Right ventricle myocardium inferior (tissue), 1 donor: ENCODE measurements at regions of chr11 and their contacts with region 1.

Region 1: DNA sequence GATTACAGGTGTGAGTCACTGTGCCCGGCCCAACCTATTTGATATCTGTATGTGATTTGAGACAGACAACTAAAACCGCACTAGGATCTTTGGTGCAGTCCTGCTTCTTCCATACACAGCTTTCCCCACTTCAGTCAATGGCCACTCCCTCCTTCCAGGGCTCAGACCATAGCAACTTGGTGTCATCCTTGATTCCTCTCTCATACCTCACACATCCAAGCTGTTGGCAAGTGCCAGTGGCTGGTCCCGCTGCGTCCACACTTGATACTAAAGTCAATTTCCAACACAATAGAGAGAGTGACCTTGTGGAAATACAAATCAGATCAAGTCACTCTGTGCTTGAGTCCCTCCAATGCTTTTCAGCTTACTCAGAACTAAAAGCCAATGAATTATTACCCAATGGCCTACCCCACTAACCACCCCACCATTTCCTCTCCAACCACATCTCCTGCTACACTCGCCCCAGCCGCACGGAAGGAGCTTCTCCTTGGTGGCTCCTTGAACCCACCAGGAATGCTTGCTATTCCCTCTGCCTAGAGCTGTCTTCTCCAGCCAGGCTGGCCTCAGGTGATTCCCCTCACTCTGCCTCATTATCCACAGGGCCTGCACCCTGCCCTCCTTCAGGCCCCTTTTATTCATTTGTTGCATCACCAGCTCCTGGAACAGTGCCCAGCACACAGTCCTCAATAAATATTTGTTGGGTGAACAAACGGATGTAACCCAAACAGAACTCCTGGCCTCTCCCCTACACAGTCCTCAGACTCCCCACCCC is 12.9 kb downstream of the ABTB2 start:
- DNase-seq: no peak
- ATAC-seq: no peak

Region 2: GRCh38 chr11:33723238-33723887 is 621.6 kb before region 1 on chr11:
- intact Hi-C with region 1: no loop called
- DNase-seq: peak; percentile 57
- ATAC-seq: peak; percentile 63

Region 3: DNA sequence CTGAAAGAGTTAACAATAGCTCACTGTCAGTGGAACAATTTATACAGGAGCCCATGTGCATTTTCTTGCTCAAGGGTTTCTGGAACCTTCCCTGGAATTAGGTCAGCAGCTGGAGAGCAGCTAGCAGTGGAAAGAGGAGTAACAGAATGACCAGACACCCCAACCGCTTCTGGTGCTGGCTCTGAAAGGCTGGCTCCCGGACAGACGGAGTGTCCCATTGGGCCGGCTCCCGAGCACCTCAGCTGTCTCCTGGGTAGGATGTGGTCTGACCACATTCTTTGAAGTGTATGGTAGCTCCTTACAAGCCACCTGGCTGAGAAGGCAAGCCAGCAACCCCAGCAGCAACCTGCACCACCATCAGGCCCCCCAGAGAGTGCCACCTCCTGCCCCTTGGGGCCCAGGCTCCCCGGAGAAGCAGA is 31.8 kb before region 1 on chr11:
- intact Hi-C with region 1: loop called (anchors 5 kb)
- DNase-seq: no peak
- ATAC-seq: no peak

Region 4: DNA sequence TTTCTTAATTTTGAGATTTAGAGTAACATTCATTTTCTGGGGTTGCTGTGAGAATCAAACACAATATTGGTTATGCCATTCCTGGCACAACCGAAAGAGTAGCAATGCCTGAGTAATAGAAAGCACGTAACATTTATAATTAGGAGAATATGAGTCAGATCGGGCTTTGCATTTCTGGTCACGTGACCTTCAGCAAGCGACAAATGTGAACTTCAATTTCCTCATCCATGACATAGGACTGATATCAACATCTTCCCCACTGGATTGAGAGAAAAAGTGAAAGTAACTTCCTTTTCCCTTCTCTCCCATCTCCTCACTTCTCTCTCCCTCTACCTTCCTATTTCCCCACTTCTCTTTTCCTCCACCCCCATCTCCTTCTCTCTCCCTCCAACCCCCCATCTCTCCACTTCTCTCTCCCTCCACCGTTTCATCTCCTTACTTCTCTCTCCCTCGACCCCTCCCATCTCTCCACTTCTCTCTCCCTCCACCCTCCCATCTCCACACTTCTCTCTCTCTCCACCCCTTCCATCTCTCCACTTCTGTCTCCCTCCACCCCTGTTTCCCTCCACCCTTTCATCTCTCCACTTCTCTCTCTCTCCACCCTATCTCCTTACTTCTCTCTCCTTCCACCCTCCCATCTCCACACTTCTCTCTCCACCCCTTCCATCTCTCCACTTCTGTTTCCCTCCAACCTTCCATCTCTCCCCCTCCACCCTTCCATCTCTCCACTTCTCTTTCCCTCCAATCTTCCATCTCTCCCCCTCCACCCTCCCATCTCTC is 60.3 kb after region 1 on chr11:
- intact Hi-C with region 1: no loop called
- DNase-seq: no peak
- ATAC-seq: no peak